HCT116 (cell line): ENCODE measurements at regions of chr15 and their contacts with region 1.

Region 1: GRCh38 chr15:87620393-87620792 is 636.1 kb downstream of the NTRK3 start:
- DNase-seq: no peak
- ATAC-seq: no peak
- H3K4me3 ChIP-seq: no peak overlapping the region
- H3K27ac ChIP-seq: no peak overlapping the region
- H3K4me1 ChIP-seq: no peaks in the 10 kb centered on the region
- H3K27me3 ChIP-seq: no peaks in the 10 kb centered on the region
- CTCF ChIP-seq: no peak
- POLR2A ChIP-seq: no peak
- RAD21 ChIP-seq: no peak

Region 2: DNA sequence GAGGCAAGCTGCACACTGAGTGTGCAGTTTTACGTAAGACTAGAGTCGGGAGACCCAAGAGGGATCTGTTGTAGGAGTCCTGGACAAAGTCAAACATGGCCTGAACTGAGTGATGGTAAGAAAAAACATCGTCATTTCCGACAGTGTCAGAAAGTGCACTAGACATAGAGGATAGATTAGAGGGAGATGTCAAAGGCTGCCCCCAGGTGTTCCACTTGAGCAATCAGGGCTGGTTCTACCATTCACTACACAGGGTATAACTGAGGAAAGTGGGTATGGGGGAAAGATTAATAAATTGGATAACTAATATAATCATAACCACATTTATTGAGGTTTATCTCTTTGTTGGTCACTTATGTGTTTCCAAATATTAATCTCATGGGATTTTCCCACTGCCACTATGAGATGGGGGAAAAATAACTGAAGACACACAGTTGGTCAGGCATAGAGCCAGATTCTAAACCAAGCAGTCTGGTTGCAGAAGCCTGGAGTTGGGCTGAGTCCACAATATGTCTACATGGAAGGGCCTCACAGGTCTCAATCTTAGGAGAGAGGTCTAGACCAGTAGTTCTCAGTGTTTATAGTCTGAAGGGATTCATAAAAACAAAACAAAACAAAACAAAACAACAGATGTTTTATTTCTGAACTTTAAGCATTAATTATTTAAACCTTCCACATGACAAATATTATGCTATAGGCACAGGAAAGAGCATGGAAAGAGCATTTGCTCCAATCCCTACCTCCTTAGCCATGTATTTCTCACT is 130.3 kb before region 1 on chr15:
- CTCF ChIA-PET with region 1: no interaction called
- POLR2A ChIA-PET with region 1: no interaction called
- RAD21 ChIA-PET with region 1: no interaction called
- intact Hi-C with region 1: no loop called
- DNase-seq: no peak
- ATAC-seq: no peak
- H3K4me3 ChIP-seq: no peak overlapping the region
- H3K27ac ChIP-seq: no peak overlapping the region
- H3K4me1 ChIP-seq: no peaks in the 10 kb centered on the region
- H3K27me3 ChIP-seq: no peaks in the 10 kb centered on the region
- CTCF ChIP-seq: no peak
- POLR2A ChIP-seq: no peak
- RAD21 ChIP-seq: no peak

Region 3: GRCh38 chr15:87639305-87640011 is 19.1 kb after region 1 on chr15:
- CTCF ChIA-PET with region 1: no interaction called
- POLR2A ChIA-PET with region 1: no interaction called
- RAD21 ChIA-PET with region 1: no interaction called
- intact Hi-C with region 1: loop called (anchors 2 kb)
- DNase-seq: no peak
- ATAC-seq: no peak
- H3K4me3 ChIP-seq: no peak overlapping the region
- H3K27ac ChIP-seq: no peak overlapping the region
- H3K4me1 ChIP-seq: no peaks in the 10 kb centered on the region
- H3K27me3 ChIP-seq: no peaks in the 10 kb centered on the region
- CTCF ChIP-seq: no peak
- POLR2A ChIP-seq: no peak
- RAD21 ChIP-seq: no peak

Region 4: DNA sequence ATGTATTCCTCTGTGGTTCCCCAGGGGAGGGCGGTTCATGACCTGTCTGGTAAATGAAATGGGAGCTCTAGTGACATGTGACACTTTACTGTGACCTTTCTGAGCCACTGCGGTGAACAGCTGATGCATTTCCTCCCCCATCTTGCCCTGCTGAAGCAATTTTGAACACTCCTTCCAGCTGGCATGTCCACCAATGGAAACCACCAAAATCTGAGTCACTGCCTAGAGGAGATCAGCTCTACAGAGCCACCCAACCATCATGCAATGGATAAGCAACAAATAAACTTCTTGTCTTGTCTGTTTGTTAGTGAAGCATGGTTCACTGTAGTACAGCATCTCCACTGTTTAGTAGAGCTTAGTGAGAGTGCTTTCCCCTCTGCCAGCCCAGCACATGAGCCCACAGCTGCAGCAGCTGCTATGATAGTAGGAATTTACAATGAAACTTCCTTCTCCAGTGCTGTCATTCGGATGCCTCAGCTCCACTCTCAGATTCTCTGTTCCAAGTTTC is 156.7 kb after region 1 on chr15:
- CTCF ChIA-PET with region 1: no interaction called
- POLR2A ChIA-PET with region 1: no interaction called
- RAD21 ChIA-PET with region 1: no interaction called
- intact Hi-C with region 1: no loop called
- DNase-seq: no peak
- ATAC-seq: no peak
- H3K4me3 ChIP-seq: no peak overlapping the region
- H3K27ac ChIP-seq: no peak overlapping the region
- H3K4me1 ChIP-seq: no peaks in the 10 kb centered on the region
- H3K27me3 ChIP-seq: no peaks in the 10 kb centered on the region
- CTCF ChIP-seq: no peak
- POLR2A ChIP-seq: no peak
- RAD21 ChIP-seq: no peak